ENCODE measurements at regions of chr1 and their contacts with region 1.

Region 1: DNA sequence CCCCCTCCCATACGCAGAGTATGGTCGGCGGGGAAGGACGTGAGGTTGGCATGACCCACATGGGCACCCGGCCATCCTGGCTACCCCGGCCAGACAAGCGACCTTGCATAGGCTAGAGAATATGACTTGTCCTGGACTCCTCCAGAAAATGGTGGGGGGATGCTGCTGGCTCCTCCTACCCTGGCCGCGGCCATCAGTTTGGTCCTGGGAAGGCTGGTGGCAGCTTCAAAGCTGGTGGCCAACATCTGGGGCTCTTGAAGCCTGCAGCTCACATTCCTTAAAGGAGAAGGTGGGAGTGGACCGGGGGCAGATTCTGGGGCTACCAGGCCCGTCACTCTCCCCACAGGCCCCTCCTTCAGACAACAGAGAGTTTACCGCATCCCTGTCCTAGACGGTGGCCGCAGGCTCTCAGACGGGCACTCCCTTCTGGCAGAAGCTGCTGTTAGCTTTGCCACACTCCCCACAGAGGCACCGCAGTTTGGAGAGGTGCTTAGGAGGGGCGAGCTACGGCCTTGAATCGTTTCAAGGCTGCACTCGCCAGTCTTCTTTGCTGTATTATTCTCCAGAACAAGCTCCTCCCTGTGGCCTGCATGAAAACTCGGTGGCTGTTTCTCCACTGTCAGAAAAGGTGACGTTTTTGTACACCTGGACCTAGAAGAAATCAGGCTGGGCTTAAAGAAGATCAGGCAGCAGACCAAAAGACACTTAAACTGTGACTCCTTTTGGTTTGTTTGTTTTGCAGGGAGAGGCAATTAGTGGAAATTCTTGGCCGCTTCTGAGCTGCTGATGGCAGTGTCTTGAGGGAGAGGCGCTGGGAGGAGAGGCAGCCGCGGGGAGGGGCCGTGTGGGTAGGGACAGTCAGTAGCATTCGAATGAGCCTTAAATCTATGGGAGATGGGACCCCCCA is 68.0 kb downstream of the RUNX3 start:
- DNase-seq: no peak
- ATAC-seq: peak; percentile 21 to 68 (median 43)
- H3K4me3 ChIP-seq: no peak overlapping the region
- H3K4me3 Mint-ChIP-seq: peak overlapping the region; percentile 82
- H3K27ac ChIP-seq: peak overlapping the region; percentile 63
- H3K27ac Mint-ChIP-seq: peak overlapping the region; percentile 81 to 86
- H3K4me1 ChIP-seq: peaks cover 80% of the 10 kb centered on the region
- H3K4me1 Mint-ChIP-seq: peaks cover 66 to 69% of the 10 kb centered on the region in 2 donors
- H3K27me3 ChIP-seq: no peaks in the 10 kb centered on the region
- H3K27me3 Mint-ChIP-seq: no peaks in the 10 kb centered on the region
- CTCF ChIP-seq: no peak

Region 2: GRCh38 chr1:24897767-24898483 is 35.9 kb after region 1 on chr1:
- intact Hi-C with region 1: loop called (anchors 2 kb)
- DNase-seq: peak; percentile 65 to 73
- ATAC-seq: peak; percentile 61 to 73 (median 67)
- H3K4me3 ChIP-seq: no peak overlapping the region
- H3K4me3 Mint-ChIP-seq: peak overlapping the region; percentile 52
- H3K27ac ChIP-seq: peak overlapping the region; percentile 55
- H3K27ac Mint-ChIP-seq: peak overlapping the region; percentile 91 to 99
- H3K4me1 ChIP-seq: peaks cover 72% of the 10 kb centered on the region
- H3K4me1 Mint-ChIP-seq: peaks cover 47 to 70% of the 10 kb centered on the region in 2 donors
- H3K27me3 ChIP-seq: no peaks in the 10 kb centered on the region
- H3K27me3 Mint-ChIP-seq: no peaks in the 10 kb centered on the region
- CTCF ChIP-seq: peak; percentile 84

Region 3: DNA sequence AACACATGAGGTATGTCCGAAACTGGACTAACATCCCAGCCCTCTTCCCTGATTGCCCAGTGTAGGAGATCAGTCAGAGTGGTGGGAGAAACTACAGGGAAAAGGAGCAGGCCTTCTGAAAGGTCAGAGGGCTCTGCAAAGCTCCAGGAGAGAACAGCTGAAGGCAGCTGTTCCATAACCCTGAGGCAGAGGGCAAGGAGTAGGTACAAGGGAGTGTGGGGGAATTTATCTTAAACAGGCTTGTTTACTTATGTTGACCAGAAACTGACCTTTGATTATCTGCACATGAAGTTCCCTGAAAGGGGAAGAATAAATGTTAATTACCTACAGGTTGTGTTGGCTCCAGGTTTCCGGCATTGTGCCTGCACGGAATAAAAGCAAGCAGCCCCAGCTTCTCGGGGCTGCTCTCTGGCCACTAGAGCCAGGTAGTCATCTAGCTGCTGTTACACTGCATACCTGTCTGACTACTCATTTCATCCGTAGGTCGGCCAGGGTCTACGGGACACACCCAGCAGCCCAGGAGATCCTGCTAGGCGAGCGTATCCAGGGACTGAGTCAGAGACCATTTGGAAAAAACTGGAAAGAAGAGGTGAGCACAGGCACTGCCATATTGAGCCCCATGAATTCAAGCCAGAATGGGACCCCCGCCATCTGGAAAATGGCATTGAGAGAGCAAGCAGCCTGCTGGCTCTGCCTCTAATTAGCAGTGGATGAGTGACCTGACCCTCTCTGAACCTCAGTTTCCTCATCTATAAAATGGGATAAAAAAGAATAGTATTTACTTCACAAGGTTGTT is 1028.4 kb after region 1 on chr1:
- intact Hi-C with region 1: no loop called
- DNase-seq: no peak
- ATAC-seq: no peak
- H3K4me3 ChIP-seq: no peak overlapping the region
- H3K4me3 Mint-ChIP-seq: no peak overlapping the region
- H3K27ac ChIP-seq: no peak overlapping the region
- H3K27ac Mint-ChIP-seq: no peak overlapping the region
- H3K4me1 ChIP-seq: peaks cover 5% of the 10 kb centered on the region
- H3K4me1 Mint-ChIP-seq: peaks cover 4% of the 10 kb centered on the region in 2 donors
- H3K27me3 ChIP-seq: no peaks in the 10 kb centered on the region
- H3K27me3 Mint-ChIP-seq: no peaks in the 10 kb centered on the region
- CTCF ChIP-seq: no peak